Naive thymus-derived CD4-positive, alpha-beta T cell (primary cell): ENCODE measurements at regions of chr18 and their contacts with region 1.

Region 1: DNA sequence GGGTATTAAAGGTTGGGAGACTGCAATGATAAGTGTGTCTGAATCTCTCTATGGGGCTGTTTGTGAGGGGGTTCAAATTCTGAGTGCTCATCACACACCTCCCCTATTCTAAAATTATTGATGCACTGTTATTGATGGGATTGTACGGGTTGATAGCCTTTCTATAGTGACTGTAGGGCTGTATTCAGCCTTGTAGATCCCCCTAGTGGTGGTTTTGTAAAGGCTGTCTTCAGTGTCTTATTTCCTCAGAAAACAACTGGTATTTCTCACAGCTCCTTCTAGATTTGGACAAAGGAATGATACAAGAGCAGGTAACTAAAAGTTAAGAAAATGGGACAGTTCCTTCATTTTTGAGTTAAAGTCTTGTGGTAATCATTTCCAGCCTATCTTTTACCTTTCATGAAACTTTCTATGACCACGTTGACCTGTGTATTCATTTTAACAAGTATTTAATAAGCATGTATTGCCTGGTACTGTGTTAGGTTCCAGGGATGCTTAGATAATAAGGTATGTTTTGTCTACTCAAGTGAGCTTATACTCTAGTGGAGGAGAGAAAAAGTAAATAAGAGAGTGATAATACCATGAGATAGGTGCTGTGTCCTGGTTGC is 21.2 kb downstream of the SMAD4 start:
- DNase-seq: peak in 7 of 9 donors; percentile 47 to 71 (median 62)
- ATAC-seq: peak; percentile 95
- H3K4me3 ChIP-seq: no peak overlapping the region
- H3K4me3 Mint-ChIP-seq: no peak overlapping the region
- H3K27ac ChIP-seq: no peak overlapping the region
- H3K27ac Mint-ChIP-seq: peak overlapping the region in 8 of 9 donors; percentile 3 to 80 (median 36)
- H3K4me1 ChIP-seq: peaks cover 8% of the 10 kb centered on the region in 2 donors
- H3K4me1 Mint-ChIP-seq: peaks cover 17 to 55% (median 42%) of the 10 kb centered on the region in 7 donors
- H3K27me3 ChIP-seq: no peaks in the 10 kb centered on the region
- H3K27me3 Mint-ChIP-seq: no peaks in the 10 kb centered on the region

Region 2: DNA sequence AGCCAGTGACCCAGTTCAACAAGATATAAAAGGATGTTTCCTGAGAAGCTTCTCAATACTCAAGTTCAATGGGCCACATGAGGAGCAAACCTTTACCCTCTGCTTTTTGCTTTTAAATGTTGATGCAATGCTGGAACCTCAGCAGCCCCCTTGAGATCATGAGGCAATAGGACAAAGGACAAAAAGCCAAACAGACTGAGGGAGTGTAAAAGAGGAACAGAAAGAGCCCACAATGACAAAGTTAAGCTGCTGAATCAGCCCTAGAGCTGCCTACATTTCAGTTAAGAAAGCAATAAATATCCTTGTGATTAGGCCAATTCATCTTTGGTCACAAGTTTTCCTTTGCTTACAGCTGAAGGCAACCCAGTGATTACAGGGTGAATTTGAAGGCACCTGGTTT is 308.3 kb before region 1 on chr18:
- CTCF ChIA-PET with region 1: no interaction called
- POLR2A ChIA-PET with region 1: no interaction called
- intact Hi-C with region 1: no loop called
- DNase-seq: no peak
- ATAC-seq: no peak
- H3K4me3 ChIP-seq: no peak overlapping the region
- H3K4me3 Mint-ChIP-seq: no peak overlapping the region
- H3K27ac ChIP-seq: no peak overlapping the region
- H3K27ac Mint-ChIP-seq: no peak overlapping the region
- H3K4me1 ChIP-seq: no peaks in the 10 kb centered on the region
- H3K4me1 Mint-ChIP-seq: no peaks in the 10 kb centered on the region
- H3K27me3 ChIP-seq: no peaks in the 10 kb centered on the region
- H3K27me3 Mint-ChIP-seq: peaks cover 4 to 23% (median 12%) of the 10 kb centered on the region in 5 donors

Region 3: DNA sequence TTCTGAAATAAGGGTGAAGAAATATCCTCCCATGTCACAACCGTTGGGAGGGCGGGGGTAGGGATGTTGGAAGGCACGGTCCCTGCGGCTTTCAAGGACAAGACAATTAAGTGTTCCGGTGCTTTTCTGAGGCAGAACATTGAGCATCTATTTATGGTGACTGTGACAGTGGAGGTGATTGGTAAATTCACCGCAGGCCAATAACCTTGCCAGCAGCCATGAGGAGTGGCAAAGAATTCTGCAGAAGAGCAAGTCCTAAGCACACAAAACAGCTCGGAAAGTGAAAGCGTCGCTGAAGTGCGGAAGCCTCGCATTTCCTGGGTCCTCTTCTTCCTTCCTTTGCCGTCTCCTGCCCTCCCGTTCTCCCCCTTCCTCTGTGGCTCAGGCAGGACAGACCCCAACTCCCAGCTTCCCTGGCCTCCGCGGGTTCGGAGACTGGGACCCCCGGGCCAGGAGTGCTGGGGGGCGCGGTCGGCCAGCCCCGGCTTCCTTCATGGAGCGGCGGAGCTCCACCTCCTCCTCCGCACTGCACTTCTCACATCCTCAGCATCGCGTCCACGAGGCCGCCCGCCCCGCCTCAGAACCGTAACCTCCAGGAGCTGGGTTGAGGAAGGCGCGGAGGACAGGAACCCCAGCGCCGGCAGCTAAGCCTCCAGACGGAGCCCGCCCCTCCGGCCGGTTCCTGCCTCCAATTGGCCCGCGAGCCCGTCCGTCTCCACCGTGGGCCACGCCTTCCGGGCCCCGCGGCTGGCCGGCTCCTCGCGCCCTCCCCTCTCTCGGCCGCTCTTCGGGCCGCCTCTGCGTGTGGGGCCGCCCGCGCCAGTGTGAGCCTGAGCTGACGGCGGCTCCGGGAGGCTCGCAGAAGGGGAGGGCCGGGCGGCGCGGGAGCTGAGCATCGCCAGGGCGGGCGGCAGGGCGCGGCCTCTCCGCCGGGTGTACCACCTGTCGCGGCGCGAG is 172.6 kb before region 1 on chr18 and contains the start of gene ME2:
- CTCF ChIA-PET with region 1: interaction called, 3 read pairs
- POLR2A ChIA-PET with region 1: interaction called, 3 read pairs
- intact Hi-C with region 1: loop called (anchors 5 kb)
- DNase-seq: peak; percentile 82 to 95 (median 89)
- ATAC-seq: peak; percentile 94
- H3K4me3 ChIP-seq: peak within 1 kb of the TSS; percentile 61
- H3K4me3 Mint-ChIP-seq: peak within 1 kb of the TSS; percentile 95 to 99 (median 97)
- H3K27ac ChIP-seq: peak within 1 kb of the TSS; percentile 98
- H3K27ac Mint-ChIP-seq: peak within 1 kb of the TSS; percentile 93 to 99 (median 98)
- H3K4me1 ChIP-seq: peaks cover 17% of the 10 kb centered on the region in 2 donors
- H3K4me1 Mint-ChIP-seq: peaks cover 18 to 37% (median 34%) of the 10 kb centered on the region in 7 donors
- H3K27me3 ChIP-seq: no peaks in the 10 kb centered on the region
- H3K27me3 Mint-ChIP-seq: peaks cover 0 to 11% (median 4%) of the 10 kb centered on the region in 5 donors
- total RNA-seq, gene ME2: 29.4 to 84.7 (median 43.2) TPM

Region 4: DNA sequence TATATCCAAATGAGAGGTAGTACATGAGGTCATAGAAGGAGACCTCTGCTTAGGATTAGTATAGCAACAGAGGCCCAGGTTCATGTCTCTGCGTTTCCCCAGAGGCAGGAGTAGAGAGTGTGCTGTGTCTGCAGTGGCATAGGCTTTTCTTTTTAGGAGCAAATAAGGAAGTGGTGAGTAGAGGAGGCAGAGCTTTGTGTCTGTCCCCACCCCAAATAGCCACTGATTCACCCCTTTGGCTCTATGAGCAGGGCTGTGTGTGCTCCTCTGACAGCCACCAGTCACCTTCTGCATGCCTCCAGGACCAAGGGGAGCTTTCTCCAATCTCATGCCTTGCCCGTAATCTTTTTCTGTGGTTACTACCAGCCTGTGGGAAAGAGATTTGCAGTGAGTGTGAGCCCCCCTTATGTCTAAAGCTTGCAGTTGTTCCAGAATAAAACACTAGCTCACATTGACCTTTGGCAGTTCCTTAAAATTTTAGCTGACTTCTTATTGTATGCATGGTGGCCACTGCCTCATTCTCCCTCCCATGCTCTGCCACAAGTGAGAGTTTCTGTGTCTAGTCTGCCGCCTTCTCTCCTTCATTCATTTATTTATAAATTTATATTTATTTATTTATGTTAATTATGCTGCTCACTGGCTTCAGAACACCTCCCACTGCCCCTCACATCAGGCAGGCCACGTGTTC is 106.8 kb before region 1 on chr18:
- CTCF ChIA-PET with region 1: no interaction called
- POLR2A ChIA-PET with region 1: no interaction called
- intact Hi-C with region 1: loop called in 1 of 2 experiments (anchors 5 kb)
- DNase-seq: no peak
- ATAC-seq: peak; percentile 51
- H3K4me3 ChIP-seq: no peak overlapping the region
- H3K4me3 Mint-ChIP-seq: no peak overlapping the region
- H3K27ac ChIP-seq: no peak overlapping the region
- H3K27ac Mint-ChIP-seq: peak overlapping the region in 4 of 9 donors; percentile 9 to 64 (median 36)
- H3K4me1 ChIP-seq: no peaks in the 10 kb centered on the region
- H3K4me1 Mint-ChIP-seq: no peaks in the 10 kb centered on the region
- H3K27me3 ChIP-seq: no peaks in the 10 kb centered on the region
- H3K27me3 Mint-ChIP-seq: no peaks in the 10 kb centered on the region

Region 5: DNA sequence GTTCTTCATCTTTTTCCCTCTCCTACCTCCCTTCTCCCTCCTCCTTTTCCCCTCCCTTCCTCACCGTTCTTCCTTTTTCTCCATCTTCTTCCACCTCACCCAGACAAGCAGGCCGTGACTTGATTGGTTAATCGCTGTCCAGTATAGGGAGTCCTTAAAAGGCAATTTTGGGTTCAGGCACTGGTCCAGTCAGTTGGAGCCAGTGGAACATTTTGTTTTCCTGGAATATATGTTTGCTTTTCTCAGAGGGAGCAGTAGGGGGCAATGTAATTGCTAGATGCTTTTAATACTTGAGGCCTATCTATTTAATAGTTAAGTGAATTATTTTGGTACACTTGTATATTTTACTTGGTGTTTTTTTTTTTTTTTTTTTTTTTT is 68.4 kb before region 1 on chr18:
- CTCF ChIA-PET with region 1: interaction called, 9 read pairs
- POLR2A ChIA-PET with region 1: no interaction called
- intact Hi-C with region 1: loop called in 1 of 2 experiments (anchors 5 kb)
- DNase-seq: no peak
- ATAC-seq: no peak
- H3K4me3 ChIP-seq: no peak overlapping the region
- H3K4me3 Mint-ChIP-seq: no peak overlapping the region
- H3K27ac ChIP-seq: no peak overlapping the region
- H3K27ac Mint-ChIP-seq: no peak overlapping the region
- H3K4me1 ChIP-seq: no peaks in the 10 kb centered on the region
- H3K4me1 Mint-ChIP-seq: peaks cover 0 to 14% (median 8%) of the 10 kb centered on the region in 7 donors
- H3K27me3 ChIP-seq: no peaks in the 10 kb centered on the region
- H3K27me3 Mint-ChIP-seq: no peaks in the 10 kb centered on the region

Region 6: DNA sequence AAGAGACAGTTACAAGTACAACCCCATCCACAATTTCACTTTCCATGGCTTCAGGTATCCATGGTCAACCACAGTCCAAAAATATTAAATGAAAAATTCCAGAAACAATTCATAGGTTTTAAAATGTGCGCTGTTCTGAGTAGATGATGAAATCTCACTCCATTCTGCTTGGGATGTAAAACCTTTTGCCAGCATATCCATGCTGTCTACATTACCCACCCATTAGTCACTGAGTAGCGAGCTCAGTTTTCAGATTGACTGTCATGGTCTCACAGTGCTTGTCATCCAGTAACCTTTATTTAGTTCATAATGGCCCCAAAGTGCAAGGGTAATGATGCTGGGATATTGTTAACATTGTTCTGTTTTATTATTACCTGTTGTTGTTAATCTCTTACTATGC is 19.3 kb after region 1 on chr18:
- CTCF ChIA-PET with region 1: no interaction called
- POLR2A ChIA-PET with region 1: interaction called, 3 read pairs
- intact Hi-C with region 1: loop called in 1 of 2 experiments (anchors 2 kb)
- DNase-seq: no peak
- ATAC-seq: no peak
- H3K4me3 ChIP-seq: no peak overlapping the region
- H3K4me3 Mint-ChIP-seq: no peak overlapping the region
- H3K27ac ChIP-seq: no peak overlapping the region
- H3K27ac Mint-ChIP-seq: peak overlapping the region in 1 of 9 donors; percentile 10
- H3K4me1 ChIP-seq: peaks cover 4 to 5% of the 10 kb centered on the region in 2 donors
- H3K4me1 Mint-ChIP-seq: peaks cover 16 to 55% (median 50%) of the 10 kb centered on the region in 7 donors
- H3K27me3 ChIP-seq: no peaks in the 10 kb centered on the region
- H3K27me3 Mint-ChIP-seq: no peaks in the 10 kb centered on the region